ENCODE measurements at regions of chr15 and their contacts with region 1.

Region 1: DNA sequence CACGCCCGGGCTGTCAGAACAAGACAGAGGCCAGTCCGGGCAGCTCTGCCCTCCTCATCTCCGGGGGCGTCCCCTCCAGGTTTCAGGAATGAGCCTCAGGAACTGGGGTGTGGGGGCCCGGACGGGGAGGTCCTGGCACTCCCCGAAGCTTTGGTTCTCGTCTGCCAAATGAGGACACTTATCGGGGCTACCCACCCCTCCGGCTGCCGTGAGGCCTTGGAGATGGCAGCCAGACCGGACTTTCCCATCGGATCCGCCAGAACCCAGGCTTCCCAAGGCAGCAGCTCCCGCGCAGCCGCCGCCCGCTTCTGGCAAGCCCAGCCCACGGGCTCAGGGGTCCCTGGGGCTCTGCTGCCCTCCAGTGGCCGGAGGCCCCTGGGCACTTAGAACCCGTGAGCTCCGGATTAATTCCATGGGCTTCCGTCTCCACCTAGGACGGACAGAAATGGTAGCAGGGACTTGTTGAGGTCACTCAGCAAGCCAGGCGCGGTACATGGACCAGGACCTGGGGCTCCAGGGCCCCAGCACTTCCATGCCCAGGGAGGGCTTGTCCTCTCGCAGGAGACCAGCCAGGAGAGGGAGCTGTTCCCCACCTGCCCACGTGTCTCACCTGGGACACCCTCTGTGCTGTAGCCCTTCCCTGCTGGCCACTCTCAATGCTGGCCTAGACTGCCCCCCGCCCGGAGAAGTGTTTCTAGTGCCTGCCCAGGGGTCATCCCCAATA is 89.4 kb downstream of the LINGO1 start:
- DNase-seq: peak; percentile 90
- ATAC-seq: peak; percentile 76
- H3K4me3 Mint-ChIP-seq: no peak overlapping the region; the same call in 1 of the 2 replicates
- H3K27ac Mint-ChIP-seq: 0 out of 2 replicates have a peak overlapping the region, but pooled peaks have one; percentile 53
- H3K4me1 Mint-ChIP-seq: peaks cover 49% of the 10 kb centered on the region
- H3K27me3 Mint-ChIP-seq: peaks cover 5% of the 10 kb centered on the region
- CTCF ChIP-seq: peak; percentile 87

Region 2: DNA sequence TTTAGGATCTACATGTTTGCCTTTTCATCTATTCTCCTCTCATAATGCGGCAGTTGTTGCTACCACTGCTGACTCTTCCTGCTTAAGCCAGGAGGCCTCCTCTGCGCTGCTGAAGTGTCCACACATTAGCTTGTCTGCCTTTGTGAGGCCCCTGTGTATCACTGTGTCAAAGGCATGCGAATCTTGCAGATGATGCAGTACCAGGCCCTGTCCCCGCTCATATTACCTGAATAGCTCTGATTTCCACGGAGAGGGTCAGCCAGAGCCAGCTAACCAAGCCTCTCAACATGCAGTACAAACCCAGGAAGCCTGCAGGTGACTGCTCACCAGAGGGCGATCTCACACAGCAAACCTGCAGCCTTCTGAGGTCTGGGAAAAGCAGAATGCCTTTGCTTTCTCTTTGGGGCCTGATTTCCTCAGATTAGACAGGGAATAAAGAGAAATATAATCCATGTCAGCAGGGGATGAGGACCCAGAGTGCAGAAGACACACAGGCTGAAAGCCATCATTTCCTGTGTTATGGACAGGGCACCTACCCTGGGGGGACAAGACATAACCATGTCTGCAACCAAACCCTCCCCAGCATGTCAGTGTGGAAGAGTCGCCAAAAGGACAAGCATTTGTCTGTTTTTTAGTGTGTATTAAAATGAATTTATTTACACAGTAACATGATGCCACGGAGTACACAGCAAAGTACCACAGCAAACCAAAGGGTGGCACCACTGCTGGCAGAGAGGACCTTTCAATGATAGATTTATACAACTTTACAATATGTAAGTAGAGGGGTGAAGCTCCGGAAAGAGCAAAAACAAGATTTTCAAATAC is 435.6 kb before region 1 on chr15:
- CTCF ChIA-PET with region 1: interaction called, 131 read pairs
- POLR2A ChIA-PET with region 1: no interaction called
- DNase-seq: peak; percentile 79
- ATAC-seq: peak; percentile 94
- H3K4me3 Mint-ChIP-seq: no peak overlapping the region
- H3K27ac Mint-ChIP-seq: peak overlapping the region; percentile 95
- H3K4me1 Mint-ChIP-seq: peaks cover 10% of the 10 kb centered on the region
- H3K27me3 Mint-ChIP-seq: no peaks in the 10 kb centered on the region
- CTCF ChIP-seq: peak; percentile 59

Region 3: DNA sequence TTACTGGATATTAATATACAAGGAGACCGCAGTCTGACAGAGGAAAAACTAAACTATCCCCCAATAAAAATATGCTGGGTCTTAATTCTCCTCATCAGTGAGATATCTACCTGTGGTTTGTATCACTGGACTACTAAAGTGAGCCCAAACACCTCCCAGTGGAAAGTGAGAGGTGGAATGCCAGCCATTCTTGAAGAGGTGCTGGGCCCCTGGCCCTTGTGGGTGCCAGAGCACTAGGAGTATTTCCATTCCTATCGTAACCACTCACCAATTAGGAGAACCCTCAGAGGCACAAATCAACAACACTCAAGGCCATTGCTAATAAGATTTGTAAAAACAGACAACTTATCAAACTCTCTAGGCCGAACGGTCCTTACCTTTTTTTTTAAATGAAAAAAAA is 350.9 kb before region 1 on chr15:
- CTCF ChIA-PET with region 1: interaction called, 110 read pairs
- POLR2A ChIA-PET with region 1: no interaction called
- DNase-seq: no peak
- ATAC-seq: peak; percentile 39
- H3K4me3 Mint-ChIP-seq: no peak overlapping the region
- H3K27ac Mint-ChIP-seq: no peak overlapping the region
- H3K4me1 Mint-ChIP-seq: peaks cover 16% of the 10 kb centered on the region; the same call in 1 of the 2 replicates
- H3K27me3 Mint-ChIP-seq: no peaks in the 10 kb centered on the region
- CTCF ChIP-seq: no peak

Region 4: GRCh38 chr15:77496710-77497103 is 46.6 kb before region 1 on chr15:
- CTCF ChIA-PET with region 1: interaction called, 242 read pairs
- POLR2A ChIA-PET with region 1: interaction called, 10 read pairs
- DNase-seq: peak; percentile 91
- ATAC-seq: peak; percentile 87
- H3K4me3 Mint-ChIP-seq: no peak overlapping the region
- H3K27ac Mint-ChIP-seq: peak overlapping the region; percentile 91
- H3K4me1 Mint-ChIP-seq: peaks cover 57% of the 10 kb centered on the region
- H3K27me3 Mint-ChIP-seq: no peaks in the 10 kb centered on the region; the same call in 1 of the 2 replicates
- CTCF ChIP-seq: peak; percentile 91

Region 5: GRCh38 chr15:77568973-77569728 is 25.8 kb after region 1 on chr15:
- CTCF ChIA-PET with region 1: interaction called, 29 read pairs
- POLR2A ChIA-PET with region 1: no interaction called
- DNase-seq: no peak
- ATAC-seq: peak; percentile 14; the same call in 1 of the 2 replicates
- H3K4me3 Mint-ChIP-seq: no peak overlapping the region
- H3K27ac Mint-ChIP-seq: 0 out of 2 replicates have a peak overlapping the region, but pooled peaks have one; percentile 49
- H3K4me1 Mint-ChIP-seq: peaks cover 33% of the 10 kb centered on the region
- H3K27me3 Mint-ChIP-seq: no peaks in the 10 kb centered on the region
- CTCF ChIP-seq: no peak

Region 6: DNA sequence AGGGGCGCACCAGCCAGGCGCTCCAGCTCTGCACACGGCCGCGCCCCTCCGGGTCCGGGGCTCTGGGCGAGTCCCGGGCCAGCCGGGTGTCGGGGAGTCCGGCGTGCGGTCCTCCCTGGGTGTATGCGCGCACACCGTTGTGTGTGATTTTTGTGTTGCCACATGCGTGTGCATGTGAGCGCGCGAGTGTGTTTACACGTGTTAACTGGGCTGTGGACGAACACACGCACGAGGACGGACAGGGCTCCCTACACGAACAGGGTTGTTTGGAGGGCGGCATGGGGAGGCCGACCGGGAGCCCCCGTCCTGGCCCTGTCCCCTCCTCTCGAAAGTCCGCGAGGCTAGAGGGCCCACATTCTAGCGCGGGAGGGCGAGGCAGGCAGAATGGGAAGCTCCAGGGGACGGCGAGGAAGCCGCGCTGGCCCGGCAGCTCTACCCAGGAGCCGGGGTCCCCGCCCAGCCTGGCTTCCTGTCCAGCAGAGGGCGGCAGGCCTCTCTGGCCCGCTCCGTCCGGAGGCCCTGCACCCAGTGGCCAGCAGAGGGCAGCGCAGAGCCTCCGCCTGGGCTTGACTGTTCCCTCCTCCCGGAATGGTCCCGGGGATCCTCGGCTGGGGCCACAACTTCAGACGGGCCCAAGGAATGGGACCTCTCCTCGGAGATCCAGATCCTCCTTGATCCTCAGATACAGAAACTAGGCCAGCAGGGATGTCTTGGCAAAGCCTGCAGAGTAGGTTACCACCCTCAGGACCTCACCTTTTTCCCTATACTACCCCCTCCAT is 90.0 kb after region 1 on chr15:
- CTCF ChIA-PET with region 1: interaction called, 29 read pairs
- POLR2A ChIA-PET with region 1: interaction called, 4 read pairs
- DNase-seq: peak; percentile 98
- ATAC-seq: peak; percentile 63
- H3K4me3 Mint-ChIP-seq: peak overlapping the region; percentile 63
- H3K27ac Mint-ChIP-seq: peak overlapping the region; percentile 86
- H3K4me1 Mint-ChIP-seq: peaks cover 57% of the 10 kb centered on the region
- H3K27me3 Mint-ChIP-seq: peaks cover 7% of the 10 kb centered on the region
- CTCF ChIP-seq: peak; percentile 92